CD4-positive, alpha-beta memory T cell (primary cell): ENCODE measurements at regions of chr17 and their contacts with region 1.

Region 1: GRCh38 chr17:16438557-16439302 is 23.4 kb downstream of the TRPV2 start:
- DNase-seq: peak; percentile 94 to 97 (median 96)
- H3K4me3 ChIP-seq: peak overlapping the region; percentile 78 to 95
- H3K4me3 Mint-ChIP-seq: peak overlapping the region; percentile 98 to 100 (median 99)
- H3K27ac ChIP-seq: peak overlapping the region; percentile 94
- H3K27ac Mint-ChIP-seq: peak overlapping the region; percentile 96 to 100 (median 99)
- H3K4me1 ChIP-seq: peaks cover 45% of the 10 kb centered on the region
- H3K4me1 Mint-ChIP-seq: peaks cover 32 to 57% (median 43%) of the 10 kb centered on the region in 4 donors
- H3K27me3 ChIP-seq: no peaks in the 10 kb centered on the region
- H3K27me3 Mint-ChIP-seq: no peaks in the 10 kb centered on the region

Region 2: DNA sequence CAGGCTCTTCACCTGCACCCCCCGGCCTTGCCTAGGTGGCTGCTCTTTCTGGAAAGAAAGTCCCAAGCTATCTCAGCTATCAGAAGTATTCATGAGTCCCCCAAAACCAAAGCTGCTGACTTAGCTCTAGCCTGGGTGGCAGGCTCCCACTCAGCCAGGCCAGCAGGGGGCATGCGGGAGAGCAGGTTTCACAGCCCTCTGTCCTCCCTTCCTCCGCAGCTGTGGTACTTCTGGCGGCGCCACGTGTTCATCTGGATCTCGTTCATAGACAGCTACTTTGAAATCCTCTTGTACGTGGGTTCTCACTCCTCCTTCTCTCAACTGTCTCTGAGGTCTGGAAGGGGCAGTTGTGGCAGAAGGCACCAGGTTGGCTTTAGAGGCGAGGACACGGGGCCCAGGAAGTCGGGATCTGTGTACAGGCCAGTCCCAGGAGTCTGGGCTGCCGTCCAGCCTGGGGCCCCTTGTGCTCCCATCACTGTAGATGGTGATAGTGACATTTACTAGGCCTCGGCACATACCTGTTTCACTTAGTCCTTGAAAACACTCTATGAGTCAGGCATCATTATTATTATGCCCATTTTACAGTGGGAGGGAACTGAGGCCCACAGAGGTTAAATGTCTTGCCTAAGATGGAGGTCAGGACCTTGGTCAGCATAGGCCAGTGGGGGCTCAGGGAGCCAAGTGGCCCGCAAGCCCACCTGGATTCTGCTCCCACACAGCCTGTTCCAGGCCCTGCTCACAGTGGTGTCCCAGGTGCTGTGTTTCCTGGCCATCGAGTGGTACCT is 10.4 kb before region 1 on chr17:
- CTCF ChIA-PET with region 1: interaction called, 15 read pairs
- POLR2A ChIA-PET with region 1: interaction called, 18 read pairs
- intact Hi-C with region 1: no loop called
- DNase-seq: peak in 3 of 5 donors; percentile 15 to 38 (median 24)
- H3K4me3 ChIP-seq: no peak overlapping the region
- H3K4me3 Mint-ChIP-seq: no peak overlapping the region
- H3K27ac ChIP-seq: no peak overlapping the region
- H3K27ac Mint-ChIP-seq: peak overlapping the region in 2 of 7 donors; percentile 15 to 29
- H3K4me1 ChIP-seq: no peaks in the 10 kb centered on the region
- H3K4me1 Mint-ChIP-seq: peaks cover 0 to 7% (median 3%) of the 10 kb centered on the region in 4 donors
- H3K27me3 ChIP-seq: no peaks in the 10 kb centered on the region
- H3K27me3 Mint-ChIP-seq: no peaks in the 10 kb centered on the region

Region 3: GRCh38 chr17:16853661-16854320 is 415.1 kb after region 1 on chr17:
- CTCF ChIA-PET with region 1: no interaction called
- POLR2A ChIA-PET with region 1: no interaction called
- intact Hi-C with region 1: no loop called
- DNase-seq: no peak
- H3K4me3 ChIP-seq: no peak overlapping the region
- H3K4me3 Mint-ChIP-seq: no peak overlapping the region
- H3K27ac ChIP-seq: no peak overlapping the region
- H3K27ac Mint-ChIP-seq: no peak overlapping the region
- H3K4me1 ChIP-seq: no peaks in the 10 kb centered on the region
- H3K4me1 Mint-ChIP-seq: no peaks in the 10 kb centered on the region
- H3K27me3 ChIP-seq: no peaks in the 10 kb centered on the region
- H3K27me3 Mint-ChIP-seq: peaks cover 2% of the 10 kb centered on the region in 2 donors